Activated T-helper 1 cell treated with anti-CD3 and anti-CD28 coated beads, Interleukin-12 subunit alpha, Interleukin-12 subunit beta, Interleukin-2, Interleukin-4 antibody, amounts not matched to agents 30 ng/mL and 10 ng/mL and 1 ng/mL, durations not matched to agents 14 hours and 24 hours and 36 hours (primary cell): ENCODE measurements at regions of chr12 and their contacts with region 1.

Region 1: GRCh38 chr12:31682136-31682962 is 22.9 kb downstream of the ETFBKMT start:
- DNase-seq: peak; percentile 62
- H3K4me3 Mint-ChIP-seq: no peak overlapping the region
- H3K27ac Mint-ChIP-seq: peak overlapping the region; percentile 50
- H3K4me1 Mint-ChIP-seq: peaks cover 12% of the 10 kb centered on the region
- H3K27me3 Mint-ChIP-seq: no peaks in the 10 kb centered on the region

Region 2: DNA sequence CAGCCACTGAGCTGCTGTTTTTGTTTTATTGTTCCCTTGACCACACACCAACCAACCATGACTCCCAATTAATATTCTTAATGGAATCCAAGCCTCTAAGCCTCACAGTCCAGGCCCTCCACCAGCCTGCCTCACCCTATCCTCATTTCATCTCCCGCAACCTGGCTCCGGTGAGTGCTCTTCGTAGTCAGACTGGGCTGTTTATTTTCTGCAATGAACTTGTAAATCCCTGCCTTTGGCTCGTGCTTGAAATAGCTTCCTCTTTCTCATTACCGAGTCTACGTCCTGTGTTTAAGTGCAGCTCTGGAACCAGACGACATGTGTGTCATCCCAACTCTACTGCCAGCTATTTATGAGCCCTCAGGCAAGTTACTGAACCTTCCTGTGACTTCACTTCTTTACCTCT is 35.3 kb before region 1 on chr12:
- intact Hi-C with region 1: no loop called
- DNase-seq: no peak
- H3K4me3 Mint-ChIP-seq: no peak overlapping the region
- H3K27ac Mint-ChIP-seq: no peak overlapping the region
- H3K4me1 Mint-ChIP-seq: no peaks in the 10 kb centered on the region
- H3K27me3 Mint-ChIP-seq: peaks cover 2% of the 10 kb centered on the region

Region 3: DNA sequence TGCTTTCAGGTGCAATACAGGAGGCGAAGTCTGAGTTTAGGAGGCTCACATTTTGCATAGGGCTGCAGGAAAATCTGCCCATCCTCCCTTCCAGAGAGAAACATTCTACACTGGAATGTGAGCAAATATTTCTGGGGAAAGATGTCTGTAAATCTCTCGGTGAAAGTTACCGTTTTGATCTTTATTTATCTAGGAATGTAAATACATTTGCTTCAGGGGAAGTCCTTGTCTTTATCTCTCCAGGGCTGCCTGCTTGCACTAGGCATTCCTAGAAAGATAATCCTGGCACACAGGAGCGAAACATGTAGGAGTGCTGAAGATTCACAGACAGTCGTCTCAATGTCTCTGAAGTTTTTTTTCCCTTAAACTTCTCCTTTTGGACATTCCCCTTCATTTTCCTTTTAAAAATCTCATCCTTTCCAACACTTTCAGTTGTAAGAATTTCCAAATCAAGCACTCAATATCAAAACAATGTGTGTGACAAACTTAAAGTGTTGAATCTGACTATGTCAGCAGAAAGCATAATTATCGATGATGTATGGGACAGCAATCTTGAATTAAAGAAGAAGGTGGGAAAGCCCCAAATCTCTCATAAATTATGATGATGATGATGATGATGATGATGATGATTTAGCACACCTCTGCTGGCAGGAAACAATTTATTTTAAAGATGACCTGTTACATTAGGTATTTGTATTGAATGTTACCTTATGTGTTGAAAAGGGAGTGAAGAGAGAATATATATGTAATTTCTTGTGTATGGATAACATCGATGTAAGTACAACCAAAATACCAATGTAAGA is 163.5 kb after region 1 on chr12:
- intact Hi-C with region 1: no loop called
- DNase-seq: no peak
- H3K4me3 Mint-ChIP-seq: no peak overlapping the region
- H3K27ac Mint-ChIP-seq: no peak overlapping the region
- H3K4me1 Mint-ChIP-seq: peaks cover 7% of the 10 kb centered on the region
- H3K27me3 Mint-ChIP-seq: no peaks in the 10 kb centered on the region

Region 4: DNA sequence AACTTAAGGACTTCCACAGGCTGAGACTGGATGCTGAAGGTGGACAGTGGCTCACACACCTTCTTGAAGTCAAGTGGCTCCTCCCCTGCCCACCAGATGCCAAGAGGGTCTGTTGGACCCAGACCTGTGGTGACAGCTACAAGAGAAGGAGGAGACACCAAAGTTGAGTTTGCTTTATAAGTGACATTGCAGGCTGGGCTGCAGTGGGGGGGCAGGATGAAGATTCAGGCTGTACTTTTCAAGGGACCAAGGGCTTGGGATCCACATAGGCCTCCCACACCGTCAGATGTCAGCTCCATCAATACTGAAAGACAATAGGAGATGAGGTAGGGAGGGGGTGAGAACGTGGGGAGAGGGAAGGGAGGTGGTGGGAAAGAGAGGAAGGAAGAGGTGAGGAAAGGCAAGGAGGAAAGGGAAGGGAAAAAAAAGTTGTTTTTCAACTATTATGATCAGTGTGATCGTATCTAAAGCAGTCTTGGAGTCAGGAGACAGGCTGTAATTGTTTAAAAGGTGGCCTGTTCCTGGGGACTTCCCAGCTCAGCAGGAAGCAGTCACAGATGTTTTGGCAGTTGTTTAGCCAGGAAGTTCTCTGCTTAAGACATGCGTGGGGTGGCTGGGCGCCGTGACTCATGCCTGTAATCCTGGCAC is 192.7 kb after region 1 on chr12:
- intact Hi-C with region 1: loop called (anchors 5 kb)
- DNase-seq: peak; percentile 68
- H3K4me3 Mint-ChIP-seq: peak overlapping the region; percentile 80
- H3K27ac Mint-ChIP-seq: peak overlapping the region; percentile 100
- H3K4me1 Mint-ChIP-seq: peaks cover 30% of the 10 kb centered on the region
- H3K27me3 Mint-ChIP-seq: no peaks in the 10 kb centered on the region

Region 5: DNA sequence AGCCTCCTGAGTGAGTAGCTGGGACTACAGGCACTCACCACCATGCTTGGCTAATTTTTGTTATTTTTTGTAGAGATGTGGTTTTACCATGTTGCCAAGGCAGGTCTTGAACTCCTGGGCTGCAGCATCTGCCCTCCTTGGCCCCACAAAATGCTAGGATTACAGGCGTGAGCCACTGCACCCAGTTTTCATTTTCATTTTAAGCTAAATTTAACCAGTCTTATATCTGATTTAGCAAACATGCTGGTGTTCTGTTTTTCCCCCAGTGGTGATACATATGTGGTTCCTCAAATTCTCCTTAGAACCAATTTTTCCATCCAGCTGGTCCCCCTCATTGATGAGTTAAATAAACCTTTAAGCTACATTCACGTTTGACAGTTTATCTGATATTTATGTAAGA is 380.5 kb after region 1 on chr12:
- intact Hi-C with region 1: loop called (anchors 1 kb)
- DNase-seq: no peak
- H3K4me3 Mint-ChIP-seq: no peak overlapping the region
- H3K27ac Mint-ChIP-seq: no peak overlapping the region
- H3K4me1 Mint-ChIP-seq: no peaks in the 10 kb centered on the region
- H3K27me3 Mint-ChIP-seq: no peaks in the 10 kb centered on the region

Region 6: DNA sequence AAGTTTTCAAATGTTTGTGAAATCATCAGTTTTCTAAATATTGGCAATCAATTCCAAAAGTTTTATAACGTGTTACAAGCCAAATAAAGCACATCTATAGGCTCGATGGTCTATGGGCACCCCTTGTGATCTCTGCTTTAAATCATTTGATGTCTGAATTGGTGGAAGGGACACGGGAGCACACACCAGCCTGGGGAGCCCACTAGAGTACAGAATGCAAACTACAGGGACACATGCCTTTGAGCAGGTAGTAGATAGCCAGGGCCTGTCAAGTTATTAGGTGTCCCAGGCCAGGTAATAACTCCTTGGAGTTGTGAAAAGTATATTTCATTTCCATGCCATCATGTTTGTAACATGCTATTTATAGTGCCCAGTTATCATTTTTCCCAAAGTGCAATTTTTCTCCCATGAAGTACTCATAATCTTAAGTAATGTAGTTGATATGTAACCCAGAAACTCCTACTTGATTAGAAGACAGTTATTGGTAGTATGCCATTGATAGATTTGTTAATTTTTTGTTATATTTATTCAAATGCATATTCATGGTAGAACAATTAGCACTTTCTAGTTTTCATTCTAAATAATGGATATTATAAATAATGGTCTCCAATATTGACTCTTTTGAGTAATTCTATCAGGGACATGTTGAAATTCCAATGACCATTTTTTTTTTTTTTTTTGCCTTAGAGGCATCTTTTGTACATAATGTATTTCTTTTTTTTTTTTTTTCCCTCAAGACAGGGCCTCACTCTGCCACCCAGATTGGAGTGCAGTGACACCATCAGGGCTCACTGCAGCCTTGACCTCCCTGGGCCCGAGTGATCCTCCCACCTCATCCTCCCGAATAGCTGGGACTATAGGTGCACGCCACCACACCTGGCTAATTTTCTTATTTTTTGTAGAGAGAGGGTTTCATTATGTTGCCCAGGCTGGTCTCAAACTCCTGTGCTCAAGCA is 620.1 kb after region 1 on chr12:
- intact Hi-C with region 1: loop called (anchors 2 kb)
- DNase-seq: no peak
- H3K4me3 Mint-ChIP-seq: no peak overlapping the region
- H3K27ac Mint-ChIP-seq: no peak overlapping the region
- H3K4me1 Mint-ChIP-seq: no peaks in the 10 kb centered on the region
- H3K27me3 Mint-ChIP-seq: no peaks in the 10 kb centered on the region